Activated T-helper 1 cell treated with anti-CD3 and anti-CD28 coated beads, Interleukin-12 subunit alpha, Interleukin-12 subunit beta, Interleukin-2, Interleukin-4 antibody, amounts not matched to agents 30 ng/mL and 10 ng/mL and 1 ng/mL, durations not matched to agents 14 hours and 24 hours and 36 hours (primary cell): ENCODE measurements at regions of chr5 and their contacts with region 1.

Region 1: GRCh38 chr5:154038707-154039457 is at the starts of genes FAM114A2 and MFAP3:
- DNase-seq: peak; percentile 88
- H3K4me3 Mint-ChIP-seq: peak within 1 kb of the TSS; percentile 98
- H3K27ac Mint-ChIP-seq: peak within 1 kb of the TSS; percentile 94
- H3K4me1 Mint-ChIP-seq: peaks cover 50% of the 10 kb centered on the region
- H3K27me3 Mint-ChIP-seq: no peaks in the 10 kb centered on the region
- total RNA-seq, gene FAM114A2: 28.3 and 28.7 TPM in 2 replicates
- total RNA-seq, gene MFAP3: 24.3 and 29.9 TPM in 2 replicates

Region 2: GRCh38 chr5:153358315-153358976 is 680.4 kb before region 1 on chr5:
- intact Hi-C with region 1: loop called (anchors 5 kb)
- DNase-seq: no peak
- H3K4me3 Mint-ChIP-seq: no peak overlapping the region
- H3K27ac Mint-ChIP-seq: no peak overlapping the region
- H3K4me1 Mint-ChIP-seq: peaks cover 8% of the 10 kb centered on the region
- H3K27me3 Mint-ChIP-seq: peaks cover 8% of the 10 kb centered on the region

Region 3: DNA sequence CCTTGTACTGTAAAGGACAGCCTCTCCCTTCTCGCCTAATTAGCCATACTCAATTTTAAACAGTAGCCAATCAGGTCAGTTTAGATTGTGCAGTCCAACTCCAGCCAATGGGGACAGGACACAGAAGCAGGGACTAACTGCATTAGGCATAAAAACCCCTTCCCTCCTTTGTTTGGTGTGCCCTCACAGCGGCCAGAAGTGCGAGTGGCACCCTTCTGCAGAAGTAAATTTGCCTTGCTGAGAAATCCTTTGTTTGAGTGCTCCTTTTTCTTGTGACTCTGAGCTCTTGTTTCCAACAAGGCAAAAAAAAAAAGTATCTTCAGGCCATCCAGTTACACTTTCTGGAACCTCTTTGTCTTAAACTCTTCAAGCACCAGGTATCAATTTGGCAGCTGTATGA is 97.6 kb before region 1 on chr5:
- intact Hi-C with region 1: no loop called
- DNase-seq: no peak
- H3K4me3 Mint-ChIP-seq: no peak overlapping the region
- H3K27ac Mint-ChIP-seq: no peak overlapping the region
- H3K4me1 Mint-ChIP-seq: no peaks in the 10 kb centered on the region
- H3K27me3 Mint-ChIP-seq: no peaks in the 10 kb centered on the region

Region 4: GRCh38 chr5:153981905-153982605 is 56.8 kb before region 1 on chr5:
- intact Hi-C with region 1: no loop called
- DNase-seq: no peak
- H3K4me3 Mint-ChIP-seq: no peak overlapping the region
- H3K27ac Mint-ChIP-seq: no peak overlapping the region
- H3K4me1 Mint-ChIP-seq: no peaks in the 10 kb centered on the region
- H3K27me3 Mint-ChIP-seq: peaks cover 12% of the 10 kb centered on the region

Region 5: GRCh38 chr5:154273028-154273617 is 234.2 kb after region 1 on chr5:
- intact Hi-C with region 1: loop called (anchors 2 kb)
- DNase-seq: peak; percentile 27
- H3K4me3 Mint-ChIP-seq: peak overlapping the region; percentile 54
- H3K27ac Mint-ChIP-seq: peak overlapping the region; percentile 79
- H3K4me1 Mint-ChIP-seq: peaks cover 69% of the 10 kb centered on the region
- H3K27me3 Mint-ChIP-seq: no peaks in the 10 kb centered on the region

Region 6: GRCh38 chr5:154445422-154446182 is 406.7 kb after region 1 on chr5 and contains the start of gene SAP30L:
- intact Hi-C with region 1: loop called (anchors 1 kb)
- DNase-seq: peak; percentile 96
- H3K4me3 Mint-ChIP-seq: peak within 1 kb of the TSS; percentile 99
- H3K27ac Mint-ChIP-seq: peak within 1 kb of the TSS; percentile 95
- H3K4me1 Mint-ChIP-seq: peaks cover 65% of the 10 kb centered on the region
- H3K27me3 Mint-ChIP-seq: no peaks in the 10 kb centered on the region
- total RNA-seq, gene SAP30L: 37.5 and 44.4 TPM in 2 replicates

Region 7: GRCh38 chr5:154899151-154899816 is 860.4 kb after region 1 on chr5:
- intact Hi-C with region 1: no loop called
- DNase-seq: no peak
- H3K4me3 Mint-ChIP-seq: no peak overlapping the region
- H3K27ac Mint-ChIP-seq: no peak overlapping the region
- H3K4me1 Mint-ChIP-seq: no peaks in the 10 kb centered on the region
- H3K27me3 Mint-ChIP-seq: no peaks in the 10 kb centered on the region